Calu3 (cell line): ENCODE measurements at regions of chr15 and their contacts with region 1.

Region 1: GRCh38 chr15:76196269-76197231 is 114.7 kb downstream of the ETFA start:
- DNase-seq: peak; percentile 72
- H3K4me3 Mint-ChIP-seq: peak overlapping the region; percentile 20
- H3K27ac Mint-ChIP-seq: no peak overlapping the region
- H3K4me1 Mint-ChIP-seq: peaks cover 44% of the 10 kb centered on the region
- H3K27me3 Mint-ChIP-seq: no peaks in the 10 kb centered on the region
- CTCF ChIP-seq: no peak

Region 2: DNA sequence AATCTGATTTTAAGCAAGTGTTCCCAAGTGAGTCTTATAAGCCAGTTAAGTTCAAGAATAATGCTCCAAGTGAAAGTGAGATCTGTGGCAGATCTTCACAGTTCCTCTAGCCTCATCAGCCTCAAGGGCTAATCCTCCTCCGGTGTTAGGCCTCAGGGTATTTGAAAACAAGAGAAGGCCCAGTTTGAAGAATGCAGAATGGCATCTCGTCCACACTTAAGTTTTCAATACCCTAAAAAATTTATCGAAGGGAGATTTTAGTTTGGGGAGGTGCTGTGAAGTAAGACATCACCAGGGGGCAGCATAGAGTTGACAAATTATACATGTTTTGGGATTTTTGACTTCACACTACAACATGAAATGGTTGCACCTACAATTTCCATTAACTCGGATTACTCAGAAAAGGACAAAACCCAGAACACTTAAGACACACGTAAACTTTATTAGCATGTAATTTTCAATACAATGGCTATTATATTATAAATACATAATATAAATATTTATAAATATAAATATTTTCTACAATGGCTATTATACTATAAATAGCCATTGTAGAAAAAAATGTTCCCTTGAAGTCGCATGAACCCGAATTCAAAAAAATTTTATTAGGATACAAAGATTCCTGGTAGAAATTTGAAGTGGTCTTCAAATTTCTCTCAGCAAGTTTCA is 139.1 kb before region 1 on chr15:
- CTCF ChIA-PET with region 1: no interaction called
- intact Hi-C with region 1: no loop called
- DNase-seq: peak; percentile 57
- H3K4me3 Mint-ChIP-seq: no peak overlapping the region
- H3K27ac Mint-ChIP-seq: no peak overlapping the region
- H3K4me1 Mint-ChIP-seq: peaks cover 20% of the 10 kb centered on the region
- H3K27me3 Mint-ChIP-seq: peaks cover 43% of the 10 kb centered on the region
- CTCF ChIP-seq: peak; percentile 77

Region 3: GRCh38 chr15:76108021-76108723 is 88.4 kb before region 1 on chr15:
- CTCF ChIA-PET with region 1: no interaction called
- intact Hi-C with region 1: no loop called
- DNase-seq: no peak
- H3K4me3 Mint-ChIP-seq: no peak overlapping the region
- H3K27ac Mint-ChIP-seq: no peak overlapping the region
- H3K4me1 Mint-ChIP-seq: no peaks in the 10 kb centered on the region
- H3K27me3 Mint-ChIP-seq: peaks cover 72% of the 10 kb centered on the region
- CTCF ChIP-seq: no peak

Region 4: GRCh38 chr15:76185716-76186115 is 10.8 kb before region 1 on chr15:
- CTCF ChIA-PET with region 1: interaction called, 18 read pairs
- intact Hi-C with region 1: no loop called
- DNase-seq: peak; percentile 63
- H3K4me3 Mint-ChIP-seq: no peak overlapping the region
- H3K27ac Mint-ChIP-seq: no peak overlapping the region
- H3K4me1 Mint-ChIP-seq: peaks cover 9% of the 10 kb centered on the region
- H3K27me3 Mint-ChIP-seq: peaks cover 35% of the 10 kb centered on the region
- CTCF ChIP-seq: peak; percentile 77

Region 5: DNA sequence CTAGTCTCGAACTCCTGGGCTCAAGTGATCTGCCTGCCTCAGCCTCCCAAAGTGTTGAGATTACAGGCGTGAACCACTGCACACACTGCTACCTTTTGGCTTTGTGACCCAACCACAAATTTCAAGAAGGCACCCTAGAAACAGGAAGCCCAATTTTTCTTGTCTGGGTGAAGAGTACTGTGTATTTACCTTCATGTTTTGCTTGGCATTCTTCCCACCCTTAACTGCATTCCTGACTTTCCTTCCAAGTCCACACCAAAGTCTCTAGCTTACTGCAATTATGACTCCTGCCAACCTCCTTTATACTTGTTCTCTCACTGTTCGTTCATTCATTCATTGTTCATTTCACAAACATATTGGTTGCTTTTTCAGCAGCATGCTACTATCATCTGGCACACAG is 20.5 kb after region 1 on chr15:
- CTCF ChIA-PET with region 1: interaction called, 9 read pairs
- intact Hi-C with region 1: loop called (anchors 1 kb)
- DNase-seq: peak; percentile 57
- H3K4me3 Mint-ChIP-seq: no peak overlapping the region
- H3K27ac Mint-ChIP-seq: peak overlapping the region; percentile 3
- H3K4me1 Mint-ChIP-seq: peaks cover 29% of the 10 kb centered on the region
- H3K27me3 Mint-ChIP-seq: no peaks in the 10 kb centered on the region
- CTCF ChIP-seq: no peak

Region 6: GRCh38 chr15:76235186-76235826 is 38.8 kb after region 1 on chr15:
- CTCF ChIA-PET with region 1: no interaction called
- intact Hi-C with region 1: no loop called
- DNase-seq: no peak
- H3K4me3 Mint-ChIP-seq: no peak overlapping the region
- H3K27ac Mint-ChIP-seq: no peak overlapping the region
- H3K4me1 Mint-ChIP-seq: no peaks in the 10 kb centered on the region
- H3K27me3 Mint-ChIP-seq: no peaks in the 10 kb centered on the region
- CTCF ChIP-seq: peak; percentile 9